ENCODE measurements at regions of chr3 and their contacts with region 1.

Region 1: GRCh38 chr3:155701882-155702465 is 42.9 kb downstream of the PLCH1 start:
- DNase-seq: no peak
- ATAC-seq: peak in 2 of 4 donors; percentile 51 to 68
- H3K4me3 ChIP-seq: no peak overlapping the region
- H3K27ac ChIP-seq: no peak overlapping the region
- H3K4me1 ChIP-seq: no peaks in the 10 kb centered on the region
- H3K27me3 ChIP-seq: no peaks in the 10 kb centered on the region
- CTCF ChIP-seq: peak; percentile 78

Region 2: GRCh38 chr3:154334973-154335420 is 1367.0 kb before region 1 on chr3:
- intact Hi-C with region 1: loop called (anchors 2 to 5 kb)
- DNase-seq: no peak
- ATAC-seq: peak in 1 of 4 donors; percentile 68
- H3K4me3 ChIP-seq: no peak overlapping the region
- H3K27ac ChIP-seq: no peak overlapping the region
- H3K4me1 ChIP-seq: no peaks in the 10 kb centered on the region
- H3K27me3 ChIP-seq: peaks cover 0 to 4% (median 3%) of the 10 kb centered on the region in 3 donors
- CTCF ChIP-seq: peak; percentile 70

Region 3: GRCh38 chr3:154758109-154758868 is 943.7 kb before region 1 on chr3:
- intact Hi-C with region 1: loop called (anchors 2 to 5 kb)
- DNase-seq: no peak
- ATAC-seq: peak in 1 of 4 donors; percentile 67
- H3K4me3 ChIP-seq: no peak overlapping the region
- H3K27ac ChIP-seq: no peak overlapping the region
- H3K4me1 ChIP-seq: peaks cover 7% of the 10 kb centered on the region
- H3K27me3 ChIP-seq: no peaks in the 10 kb centered on the region
- CTCF ChIP-seq: peak; percentile 63

Region 4: GRCh38 chr3:155352900-155353490 is 349.0 kb before region 1 on chr3:
- intact Hi-C with region 1: loop called (anchors 5 kb)
- DNase-seq: no peak
- ATAC-seq: peak in 1 of 4 donors; percentile 44
- H3K4me3 ChIP-seq: no peak overlapping the region
- H3K27ac ChIP-seq: no peak overlapping the region
- H3K4me1 ChIP-seq: no peaks in the 10 kb centered on the region
- H3K27me3 ChIP-seq: no peaks in the 10 kb centered on the region
- CTCF ChIP-seq: peak; percentile 45

Region 5: DNA sequence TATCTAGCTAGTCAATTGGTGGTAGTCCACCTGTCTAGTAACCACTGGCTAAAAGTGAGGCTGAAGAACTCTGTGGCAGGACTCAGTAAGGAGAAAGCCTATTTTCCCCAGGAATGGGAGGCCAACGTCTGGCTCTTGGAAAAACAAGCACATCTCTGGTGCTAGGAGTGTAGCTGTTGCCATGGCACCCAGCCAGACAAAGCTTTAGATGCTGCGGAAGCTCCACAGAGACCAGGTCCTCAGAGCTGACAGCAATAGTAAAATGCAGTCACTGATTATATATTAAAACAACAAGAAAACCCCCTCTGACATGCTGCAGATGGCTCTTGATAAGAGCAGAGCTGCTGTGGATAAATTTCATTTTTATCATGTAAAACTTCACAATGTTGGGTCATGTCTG is 283.6 kb before region 1 on chr3:
- intact Hi-C with region 1: no loop called
- DNase-seq: no peak
- ATAC-seq: no peak
- H3K4me3 ChIP-seq: no peak overlapping the region
- H3K27ac ChIP-seq: no peak overlapping the region
- H3K4me1 ChIP-seq: no peaks in the 10 kb centered on the region
- H3K27me3 ChIP-seq: peaks cover 0 to 3% (median 0%) of the 10 kb centered on the region in 3 donors
- CTCF ChIP-seq: no peak